ENCODE measurements at regions of chr11 and their contacts with region 1.

Region 1: DNA sequence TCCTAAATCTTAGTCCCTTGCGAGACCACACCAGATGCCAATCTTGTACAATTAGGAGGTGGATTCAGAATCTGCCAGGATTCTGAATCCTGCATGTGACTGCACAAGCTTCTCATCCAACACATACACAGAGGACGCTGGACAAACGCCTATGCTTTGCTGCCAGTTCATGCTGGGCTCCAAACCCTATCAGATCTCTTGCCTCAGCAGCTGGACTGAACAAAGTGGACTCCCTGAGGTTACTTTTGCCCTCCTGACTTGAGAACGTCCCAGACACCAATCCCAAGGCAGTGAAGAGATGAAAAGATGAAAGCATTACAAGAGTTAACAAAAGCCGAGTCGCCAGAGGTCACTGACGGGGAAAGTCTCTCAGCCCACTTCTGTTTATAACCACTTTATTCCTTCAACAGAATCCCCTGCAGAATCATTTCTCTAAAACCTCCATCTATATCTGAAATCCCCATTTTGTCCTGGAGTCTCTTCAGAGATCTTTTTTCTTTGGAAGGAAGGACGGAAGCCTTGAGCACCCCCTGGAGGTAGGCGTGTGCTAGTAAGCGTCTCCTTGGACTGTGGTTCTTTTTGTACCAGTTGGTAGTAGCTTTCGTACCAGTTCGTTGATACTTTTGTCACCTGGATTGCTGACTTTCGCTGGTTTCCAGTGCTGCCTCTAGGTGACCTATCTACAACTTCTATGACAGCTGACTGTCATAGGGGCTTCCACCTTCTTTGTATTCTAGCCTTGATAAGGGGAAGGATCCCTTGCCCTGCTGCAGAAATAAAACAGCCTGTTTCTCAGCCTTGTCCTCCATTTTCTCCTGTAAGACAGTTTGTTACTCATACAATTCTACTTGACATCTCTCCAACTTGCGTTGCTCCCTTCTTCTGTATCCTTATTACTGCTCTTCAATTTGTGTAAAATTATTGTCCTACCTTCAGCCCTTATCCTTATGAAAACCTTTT is 26.1 kb upstream of the EED start:
- DNase-seq: peak; percentile 80
- H3K4me3 Mint-ChIP-seq: peak overlapping the region; percentile 14
- H3K27ac Mint-ChIP-seq: peak overlapping the region; percentile 90
- H3K4me1 Mint-ChIP-seq: peaks cover 82% of the 10 kb centered on the region
- H3K27me3 Mint-ChIP-seq: peaks cover 3% of the 10 kb centered on the region

Region 2: GRCh38 chr11:85941380-85941973 is 276.9 kb before region 1 on chr11:
- CTCF ChIA-PET with region 1: no interaction called
- intact Hi-C with region 1: loop called (anchors 1 kb)
- DNase-seq: peak; percentile 76
- H3K4me3 Mint-ChIP-seq: no peak overlapping the region
- H3K27ac Mint-ChIP-seq: no peak overlapping the region
- H3K4me1 Mint-ChIP-seq: peaks cover 18% of the 10 kb centered on the region
- H3K27me3 Mint-ChIP-seq: no peaks in the 10 kb centered on the region

Region 3: GRCh38 chr11:86047275-86047991 is 171.0 kb before region 1 on chr11:
- CTCF ChIA-PET with region 1: interaction called, 32 read pairs
- intact Hi-C with region 1: loop called (anchors 1 kb)
- DNase-seq: peak; percentile 69
- H3K4me3 Mint-ChIP-seq: peak overlapping the region; percentile 43
- H3K27ac Mint-ChIP-seq: peak overlapping the region; percentile 93
- H3K4me1 Mint-ChIP-seq: peaks cover 92% of the 10 kb centered on the region
- H3K27me3 Mint-ChIP-seq: no peaks in the 10 kb centered on the region

Region 4: DNA sequence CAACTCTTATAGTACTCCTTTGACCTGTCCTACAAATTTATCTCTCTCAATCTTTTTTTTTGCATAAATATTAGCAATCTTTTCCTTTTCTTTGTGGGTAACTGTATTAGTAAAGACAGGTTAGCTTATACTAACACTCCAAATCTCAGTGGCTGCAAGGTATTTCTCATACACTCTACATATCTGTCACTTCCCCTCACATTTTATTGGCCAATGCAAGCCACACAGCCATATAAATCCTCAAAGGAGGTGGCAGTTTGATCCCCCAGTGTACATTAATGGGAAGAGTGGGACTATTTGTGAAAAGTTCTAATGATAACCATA is 16.4 kb before region 1 on chr11:
- CTCF ChIA-PET with region 1: interaction called, 7 read pairs
- intact Hi-C with region 1: loop called (anchors 1 kb)
- DNase-seq: peak; percentile 42
- H3K4me3 Mint-ChIP-seq: no peak overlapping the region
- H3K27ac Mint-ChIP-seq: no peak overlapping the region
- H3K4me1 Mint-ChIP-seq: no peaks in the 10 kb centered on the region
- H3K27me3 Mint-ChIP-seq: no peaks in the 10 kb centered on the region

Region 5: GRCh38 chr11:86244522-86245368 is 26.3 kb after region 1 on chr11 and contains the start of gene EED:
- CTCF ChIA-PET with region 1: interaction called, 4 read pairs
- intact Hi-C with region 1: loop called (anchors 1 kb)
- DNase-seq: peak; percentile 94
- H3K4me3 Mint-ChIP-seq: no peak within 1 kb of the TSS
- H3K27ac Mint-ChIP-seq: no peak within 1 kb of the TSS
- H3K4me1 Mint-ChIP-seq: peaks cover 35% of the 10 kb centered on the region
- H3K27me3 Mint-ChIP-seq: no peaks in the 10 kb centered on the region
- total RNA-seq, gene EED: 60.4 to 61.0 TPM

Region 6: GRCh38 chr11:86440305-86440716 is 221.9 kb after region 1 on chr11:
- CTCF ChIA-PET with region 1: no interaction called
- intact Hi-C with region 1: loop called (anchors 10 kb)
- DNase-seq: no peak
- H3K4me3 Mint-ChIP-seq: no peak overlapping the region
- H3K27ac Mint-ChIP-seq: no peak overlapping the region
- H3K4me1 Mint-ChIP-seq: peaks cover 34% of the 10 kb centered on the region
- H3K27me3 Mint-ChIP-seq: no peaks in the 10 kb centered on the region

Region 7: GRCh38 chr11:86802601-86803051 is 584.2 kb after region 1 on chr11:
- CTCF ChIA-PET with region 1: no interaction called
- intact Hi-C with region 1: loop called (anchors 5 kb)
- DNase-seq: peak; percentile 38
- H3K4me3 Mint-ChIP-seq: no peak overlapping the region
- H3K27ac Mint-ChIP-seq: no peak overlapping the region
- H3K4me1 Mint-ChIP-seq: peaks cover 53% of the 10 kb centered on the region
- H3K27me3 Mint-ChIP-seq: peaks cover 46% of the 10 kb centered on the region